ENCODE measurements at regions of chr10 and their contacts with region 1.

Region 1: GRCh38 chr10:9608602-9609001 is 1409.1 kb upstream of the CELF2 start:
- DNase-seq: no peak
- H3K4me3 ChIP-seq: no peak overlapping the region
- H3K27ac ChIP-seq: no peak overlapping the region
- H3K27me3 ChIP-seq: no peaks in the 10 kb centered on the region
- CTCF ChIP-seq: peak; percentile 68

Region 2: GRCh38 chr10:9596368-9596920 is 12.2 kb before region 1 on chr10:
- CTCF ChIA-PET with region 1: interaction called, 12 read pairs
- POLR2A ChIA-PET with region 1: no interaction called
- DNase-seq: no peak
- H3K4me3 ChIP-seq: no peak overlapping the region
- H3K27ac ChIP-seq: no peak overlapping the region
- H3K27me3 ChIP-seq: no peaks in the 10 kb centered on the region
- CTCF ChIP-seq: no peak

Region 3: GRCh38 chr10:10056961-10057360 is 448.4 kb after region 1 on chr10:
- CTCF ChIA-PET with region 1: interaction called, 10 read pairs
- POLR2A ChIA-PET with region 1: no interaction called
- DNase-seq: no peak
- H3K4me3 ChIP-seq: no peak overlapping the region
- H3K27ac ChIP-seq: no peak overlapping the region
- H3K27me3 ChIP-seq: no peaks in the 10 kb centered on the region
- CTCF ChIP-seq: peak; percentile 42

Region 4: GRCh38 chr10:11036407-11037011 is 1427.9 kb after region 1 on chr10:
- CTCF ChIA-PET with region 1: interaction called, 10 read pairs
- POLR2A ChIA-PET with region 1: no interaction called
- DNase-seq: peak; percentile 16
- H3K4me3 ChIP-seq: no peak overlapping the region
- H3K27ac ChIP-seq: no peak overlapping the region
- H3K27me3 ChIP-seq: no peaks in the 10 kb centered on the region
- CTCF ChIP-seq: peak; percentile 67

Region 5: DNA sequence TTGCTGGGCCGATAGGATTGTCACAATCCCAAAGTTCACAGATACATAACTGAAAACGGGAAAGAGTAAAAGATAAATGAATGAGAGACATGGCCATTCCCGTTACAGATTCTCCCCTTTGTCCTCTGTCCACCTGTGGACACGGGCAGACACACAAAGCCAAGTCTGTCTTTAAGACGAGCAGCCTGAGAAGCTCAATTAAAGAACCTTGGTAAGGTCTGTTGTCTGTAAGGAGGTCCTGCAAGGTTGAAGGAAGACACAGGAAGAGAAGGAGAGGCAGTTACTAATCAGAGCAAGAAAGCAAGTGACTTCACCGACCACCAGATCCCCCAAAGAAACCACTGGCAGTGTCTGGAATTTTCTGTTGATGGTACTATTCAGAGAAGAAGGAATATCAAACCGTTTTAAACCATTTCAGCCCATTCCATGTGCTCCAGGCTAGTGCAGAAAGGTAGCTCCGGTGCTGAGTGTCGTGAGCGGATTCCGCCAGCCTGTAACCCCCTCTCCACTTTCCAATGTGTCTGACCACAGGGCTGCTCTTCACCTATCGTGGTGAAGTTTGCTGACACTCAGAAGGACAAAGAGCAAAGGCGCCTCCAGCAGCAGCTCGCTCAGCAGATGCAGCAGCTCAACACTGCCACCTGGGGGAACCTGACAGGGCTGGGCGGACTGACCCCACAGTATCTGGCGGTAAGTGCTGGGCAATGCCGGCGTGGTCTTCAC is 1661.7 kb after region 1 on chr10:
- CTCF ChIA-PET with region 1: interaction called, 11 read pairs
- POLR2A ChIA-PET with region 1: no interaction called
- DNase-seq: peak; percentile 27
- H3K4me3 ChIP-seq: no peak overlapping the region
- H3K27ac ChIP-seq: no peak overlapping the region
- H3K27me3 ChIP-seq: no peaks in the 10 kb centered on the region
- CTCF ChIP-seq: peak; percentile 99